PC-3 (cell line): ENCODE measurements at regions of chr17 and their contacts with region 1.

Region 1: GRCh38 chr17:71118039-71118438 is 948.7 kb downstream of the KCNJ2 start:
- DNase-seq: peak; percentile 89
- ATAC-seq: peak; percentile 58; the same call in 1 of the 2 replicates
- H3K4me3 ChIP-seq: no peak overlapping the region
- H3K27ac ChIP-seq: no peak overlapping the region
- H3K4me1 ChIP-seq: peaks cover 3% of the 10 kb centered on the region; the same call in 1 of the 2 replicates
- H3K27me3 ChIP-seq: no peaks in the 10 kb centered on the region
- CTCF ChIP-seq: peak; percentile 96

Region 2: GRCh38 chr17:70636517-70637133 is 481.4 kb before region 1 on chr17:
- CTCF ChIA-PET with region 1: no interaction called
- POLR2A ChIA-PET with region 1: no interaction called
- intact Hi-C with region 1: loop called (anchors 5 kb)
- DNase-seq: peak; percentile 80
- ATAC-seq: no peak; the same call in 1 of the 2 replicates
- H3K4me3 ChIP-seq: no peak overlapping the region
- H3K27ac ChIP-seq: no peak overlapping the region
- H3K4me1 ChIP-seq: no peaks in the 10 kb centered on the region
- H3K27me3 ChIP-seq: peaks cover 68% of the 10 kb centered on the region
- CTCF ChIP-seq: peak; percentile 86

Region 3: DNA sequence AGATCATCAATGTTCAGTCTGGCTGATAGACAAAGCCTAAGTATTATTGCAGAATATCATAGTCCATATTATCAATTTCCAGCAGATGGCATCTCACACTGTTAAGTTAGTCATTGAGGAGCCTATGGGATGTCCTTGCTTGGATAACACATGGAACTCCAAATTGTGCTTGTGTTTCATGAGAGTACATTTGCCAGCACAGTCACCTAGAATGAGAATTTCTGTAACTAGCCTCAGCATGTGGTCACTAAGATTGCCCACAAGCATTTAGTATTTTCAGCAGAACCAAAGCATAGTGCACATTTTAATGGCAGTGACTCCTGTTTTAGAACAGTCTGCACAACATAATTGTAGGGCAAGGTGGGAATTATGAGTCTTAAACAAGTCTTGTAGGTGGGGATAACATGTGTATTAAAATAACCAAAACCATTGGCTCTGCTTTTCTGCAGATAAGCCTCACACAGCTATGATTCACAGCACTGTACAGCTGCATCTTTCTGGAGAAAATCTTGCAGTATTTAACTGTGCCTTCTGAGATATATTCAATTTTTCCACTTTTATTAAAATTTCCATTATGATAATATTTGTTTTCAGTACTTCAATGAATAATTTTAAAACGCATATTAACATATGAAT is 120.0 kb after region 1 on chr17:
- CTCF ChIA-PET with region 1: no interaction called
- POLR2A ChIA-PET with region 1: no interaction called
- intact Hi-C with region 1: loop called (anchors 2 kb)
- DNase-seq: peak; percentile 87
- ATAC-seq: peak; percentile 97
- H3K4me3 ChIP-seq: no peak overlapping the region
- H3K27ac ChIP-seq: peak overlapping the region; percentile 32
- H3K4me1 ChIP-seq: peaks cover 4% of the 10 kb centered on the region; the same call in 1 of the 2 replicates
- H3K27me3 ChIP-seq: no peaks in the 10 kb centered on the region
- CTCF ChIP-seq: peak; percentile 85

Region 4: GRCh38 chr17:71460943-71461342 is 342.9 kb after region 1 on chr17:
- CTCF ChIA-PET with region 1: no interaction called
- POLR2A ChIA-PET with region 1: no interaction called
- intact Hi-C with region 1: loop called (anchors 1 kb)
- DNase-seq: peak; percentile 74
- ATAC-seq: no peak
- H3K4me3 ChIP-seq: no peak overlapping the region
- H3K27ac ChIP-seq: no peak overlapping the region
- H3K4me1 ChIP-seq: no peaks in the 10 kb centered on the region
- H3K27me3 ChIP-seq: no peaks in the 10 kb centered on the region
- CTCF ChIP-seq: peak; percentile 89

Region 5: DNA sequence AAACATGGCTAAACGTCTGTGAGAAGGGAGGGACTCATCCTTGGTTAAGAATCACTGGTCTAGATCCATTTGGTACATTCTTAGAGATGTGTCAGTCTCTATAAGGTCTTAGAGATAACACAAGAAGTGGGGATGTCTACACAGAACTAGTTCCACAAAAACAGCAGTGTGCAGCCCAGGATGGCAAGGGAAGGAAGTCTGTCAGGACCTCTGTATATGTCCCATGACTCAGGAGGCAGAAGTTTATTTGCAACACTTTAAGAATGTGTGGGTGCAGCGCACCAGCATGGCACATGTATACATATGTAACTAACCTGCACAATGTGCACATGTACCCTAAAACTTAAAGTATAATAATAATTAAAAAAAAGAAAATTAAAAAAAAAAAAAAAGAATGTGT is 454.3 kb after region 1 on chr17:
- CTCF ChIA-PET with region 1: no interaction called
- POLR2A ChIA-PET with region 1: no interaction called
- intact Hi-C with region 1: loop called (anchors 10 kb)
- DNase-seq: peak; percentile 25
- ATAC-seq: peak; percentile 33
- H3K4me3 ChIP-seq: no peak overlapping the region
- H3K27ac ChIP-seq: no peak overlapping the region
- H3K4me1 ChIP-seq: 0 out of 2 replicates have a peak, but pooled peaks cover 3% of the 10 kb centered on the region
- H3K27me3 ChIP-seq: no peaks in the 10 kb centered on the region
- CTCF ChIP-seq: no peak

Region 6: DNA sequence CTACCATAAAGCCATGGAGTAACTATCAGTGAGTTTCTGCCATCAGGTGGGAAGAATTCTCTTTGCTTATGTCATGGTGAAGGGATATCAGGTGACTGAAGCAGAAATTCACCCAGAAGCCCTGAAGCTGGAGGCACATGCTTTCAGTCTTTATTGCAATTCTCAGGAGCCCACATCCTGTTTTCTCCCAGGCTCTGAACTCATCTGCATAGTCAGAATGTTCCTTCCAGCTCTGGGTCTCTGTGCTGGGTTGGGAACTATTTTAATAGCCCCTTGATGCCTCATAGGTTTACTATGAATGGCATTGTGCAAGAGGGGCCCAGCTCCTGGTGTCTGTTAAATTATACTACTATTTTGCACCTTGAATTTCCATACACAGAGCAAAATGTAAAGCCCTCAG is 804.4 kb after region 1 on chr17:
- CTCF ChIA-PET with region 1: no interaction called
- POLR2A ChIA-PET with region 1: no interaction called
- intact Hi-C with region 1: loop called (anchors 10 kb)
- DNase-seq: peak; percentile 98
- ATAC-seq: peak; percentile 78
- H3K4me3 ChIP-seq: no peak overlapping the region
- H3K27ac ChIP-seq: peak overlapping the region; percentile 81
- H3K4me1 ChIP-seq: peaks cover 50% of the 10 kb centered on the region
- H3K27me3 ChIP-seq: no peaks in the 10 kb centered on the region
- CTCF ChIP-seq: no peak